PC-3 (cell line): ENCODE measurements at regions of chr17 and their contacts with region 1.

Region 1: GRCh38 chr17:17681187-17681848 is at the start of gene RAI1:
- DNase-seq: peak; percentile 86
- ATAC-seq: peak; percentile 56
- H3K4me3 ChIP-seq: peak within 1 kb of the TSS; percentile 90
- H3K27ac ChIP-seq: peak within 1 kb of the TSS; percentile 68
- H3K4me1 ChIP-seq: peaks cover 40% of the 10 kb centered on the region
- H3K27me3 ChIP-seq: no peaks in the 10 kb centered on the region
- CTCF ChIP-seq: peak; percentile 58
- total RNA-seq, gene RAI1: 33.0 and 64.2 TPM in 2 replicates

Region 2: GRCh38 chr17:17737961-17738894 is 56.9 kb after region 1 on chr17:
- CTCF ChIA-PET with region 1: no interaction called
- POLR2A ChIA-PET with region 1: interaction called, 10 read pairs
- intact Hi-C with region 1: no loop called
- DNase-seq: no peak
- ATAC-seq: no peak
- H3K4me3 ChIP-seq: no peak overlapping the region
- H3K27ac ChIP-seq: no peak overlapping the region
- H3K4me1 ChIP-seq: peaks cover 22% of the 10 kb centered on the region
- H3K27me3 ChIP-seq: no peaks in the 10 kb centered on the region
- CTCF ChIP-seq: no peak

Region 3: GRCh38 chr17:17752089-17752820 is 70.9 kb after region 1 on chr17:
- CTCF ChIA-PET with region 1: no interaction called
- POLR2A ChIA-PET with region 1: no interaction called
- intact Hi-C with region 1: no loop called
- DNase-seq: peak; percentile 95
- ATAC-seq: peak; percentile 97
- H3K4me3 ChIP-seq: peak overlapping the region; percentile 67
- H3K27ac ChIP-seq: peak overlapping the region; percentile 37
- H3K4me1 ChIP-seq: peaks cover 16% of the 10 kb centered on the region
- H3K27me3 ChIP-seq: no peaks in the 10 kb centered on the region
- CTCF ChIP-seq: peak; percentile 54; the same call in 1 of the 2 replicates

Region 4: GRCh38 chr17:17774009-17774881 is 92.9 kb after region 1 on chr17:
- CTCF ChIA-PET with region 1: interaction called, 5 read pairs
- POLR2A ChIA-PET with region 1: no interaction called
- intact Hi-C with region 1: loop called (anchors 1 kb)
- DNase-seq: peak; percentile 65
- ATAC-seq: peak; percentile 81
- H3K4me3 ChIP-seq: no peak overlapping the region
- H3K27ac ChIP-seq: peak overlapping the region; percentile 65
- H3K4me1 ChIP-seq: peaks cover 12% of the 10 kb centered on the region
- H3K27me3 ChIP-seq: no peaks in the 10 kb centered on the region
- CTCF ChIP-seq: peak; percentile 78

Region 5: GRCh38 chr17:17859909-17860765 is 178.8 kb after region 1 on chr17:
- CTCF ChIA-PET with region 1: no interaction called
- POLR2A ChIA-PET with region 1: no interaction called
- intact Hi-C with region 1: loop called (anchors 5 kb)
- DNase-seq: peak; percentile 78
- ATAC-seq: peak; percentile 89
- H3K4me3 ChIP-seq: no peak overlapping the region
- H3K27ac ChIP-seq: no peak overlapping the region
- H3K4me1 ChIP-seq: peaks cover 4% of the 10 kb centered on the region
- H3K27me3 ChIP-seq: no peaks in the 10 kb centered on the region
- CTCF ChIP-seq: peak; percentile 97